ENCODE measurements at regions of chr21 and their contacts with region 1.

Region 1: DNA sequence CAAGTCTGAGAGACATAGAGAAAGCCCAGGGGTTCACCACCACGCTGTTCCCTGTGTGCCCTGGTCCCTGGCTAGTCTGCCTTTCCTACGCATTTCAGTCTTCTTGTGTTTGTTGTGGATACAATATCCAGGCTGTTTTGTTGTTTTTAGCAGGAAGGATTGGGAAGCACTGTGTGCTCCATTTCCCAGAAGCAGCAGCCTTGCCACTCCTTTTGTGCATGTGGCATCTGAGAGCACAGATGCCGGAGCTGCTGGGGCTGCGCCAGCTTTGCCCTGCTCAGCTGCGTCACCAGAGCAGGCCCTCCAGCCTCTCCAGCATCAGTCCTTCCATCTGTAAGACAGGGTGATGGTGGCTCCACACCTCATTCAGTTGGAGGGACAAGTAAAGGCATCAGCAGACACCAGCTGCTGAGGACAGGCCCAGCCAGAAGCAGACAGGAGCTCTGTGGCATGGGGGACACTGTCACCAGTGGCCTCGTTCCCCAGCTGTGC is 94.4 kb upstream of the COL6A1 start:
- DNase-seq: peak; percentile 25 to 64
- ATAC-seq: peak; percentile 21 to 88 (median 70)
- H3K4me3 ChIP-seq: no peak overlapping the region
- H3K27ac ChIP-seq: peak overlapping the region in 9 of 10 donors; percentile 6 to 94 (median 74)
- H3K4me1 ChIP-seq: peaks cover 10 to 38% (median 22%) of the 10 kb centered on the region in 9 donors
- H3K27me3 ChIP-seq: peaks cover 0 to 11% (median 0%) of the 10 kb centered on the region in 7 donors
- CTCF ChIP-seq: no peak

Region 2: DNA sequence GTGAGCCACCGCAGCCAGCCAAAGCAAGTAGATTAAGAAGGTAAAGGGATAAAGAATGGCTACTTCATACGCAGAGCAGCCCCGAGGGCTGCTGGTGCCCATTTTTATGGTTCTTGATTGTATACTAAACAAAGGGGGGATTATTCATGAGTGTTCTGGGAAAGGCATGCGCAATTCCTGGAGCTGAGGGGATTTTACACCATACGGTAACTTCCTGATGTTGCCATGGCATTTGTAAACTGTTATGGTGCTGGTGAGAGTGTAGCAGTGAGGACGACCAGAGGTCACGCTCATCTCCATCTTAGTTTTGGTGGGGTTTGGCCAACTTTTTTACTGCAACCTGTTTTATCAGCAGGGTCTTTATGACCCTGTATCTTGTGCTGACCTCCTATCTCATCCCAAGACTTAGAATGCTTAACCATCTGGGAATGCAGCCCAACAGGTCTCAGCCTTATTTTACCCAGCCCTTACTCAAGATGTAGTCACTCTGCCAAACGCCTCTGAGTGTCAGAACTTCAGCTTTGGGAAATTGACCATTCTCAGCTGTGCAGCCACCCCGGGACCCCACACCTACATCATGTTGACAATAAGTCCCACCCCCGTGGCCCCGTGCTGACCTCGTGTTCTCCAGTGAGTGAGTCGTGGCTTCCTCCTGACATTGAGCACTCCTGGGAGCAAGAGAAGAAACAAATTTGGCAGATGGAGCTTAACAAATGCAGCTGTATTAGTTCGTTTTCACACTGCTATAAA is 55.0 kb before region 1 on chr21:
- intact Hi-C with region 1: loop called in 1 of 10 experiments (anchors 5 kb)
- DNase-seq: no peak
- ATAC-seq: peak in 1 of 8 donors; percentile 12
- H3K4me3 ChIP-seq: no peak overlapping the region
- H3K27ac ChIP-seq: no peak overlapping the region
- H3K4me1 ChIP-seq: peaks cover 0 to 15% (median 9%) of the 10 kb centered on the region in 9 donors
- H3K27me3 ChIP-seq: no peaks in the 10 kb centered on the region
- CTCF ChIP-seq: no peak